T-cell (primary cell): ENCODE measurements at regions of chr1 and their contacts with region 1.

Region 1: DNA sequence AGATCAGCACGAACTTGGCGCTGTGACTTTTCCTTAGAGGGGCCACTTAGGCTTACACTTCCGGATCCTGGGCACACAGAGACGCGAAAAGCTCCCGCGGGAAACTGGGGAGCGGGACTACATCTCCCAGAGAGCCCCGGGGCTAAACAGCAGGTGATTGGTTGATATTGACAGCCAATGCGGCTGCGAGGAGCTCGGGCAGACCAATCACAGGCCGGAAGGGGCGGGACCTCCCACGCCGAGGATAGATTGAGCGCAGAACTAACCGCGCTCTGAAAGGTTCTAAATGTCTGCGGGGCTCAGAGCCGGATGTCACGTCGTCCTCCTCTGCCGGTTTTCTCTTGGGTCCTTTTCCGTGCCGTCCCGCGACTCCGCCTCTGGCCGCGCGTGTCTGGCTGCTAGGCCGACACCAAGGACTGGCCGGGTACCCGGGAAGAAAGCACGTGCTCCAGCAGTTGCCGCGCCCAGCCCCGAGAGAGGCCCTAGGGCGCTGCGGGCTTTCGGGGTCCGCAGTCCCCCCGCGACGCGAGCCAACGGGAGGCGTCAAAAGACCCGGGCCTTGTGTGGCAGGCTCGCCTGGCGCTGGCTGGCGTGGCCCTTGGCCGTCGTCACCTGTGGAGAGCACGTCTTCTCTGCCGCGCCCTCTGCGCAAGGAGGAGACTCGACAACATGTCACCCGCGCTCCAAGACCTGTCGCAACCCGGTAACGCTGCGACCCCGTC is at the start of gene MTR:
- DNase-seq: peak; percentile 85 to 97 (median 94)
- ATAC-seq: peak; percentile 91 to 96 (median 96)
- H3K4me3 ChIP-seq: peak within 1 kb of the TSS; percentile 79 to 82
- H3K4me3 Mint-ChIP-seq: peak within 1 kb of the TSS; percentile 89 to 98 (median 96)
- H3K27ac ChIP-seq: peak within 1 kb of the TSS; percentile 97
- H3K27ac Mint-ChIP-seq: peak within 1 kb of the TSS; percentile 93 to 94
- H3K4me1 ChIP-seq: peaks cover 7 to 15% of the 10 kb centered on the region in 2 experiments
- H3K4me1 Mint-ChIP-seq: peaks cover 44 to 55% (median 45%) of the 10 kb centered on the region in 3 donors
- H3K27me3 ChIP-seq: peaks cover 2 to 4% of the 10 kb centered on the region in 2 experiments
- H3K27me3 Mint-ChIP-seq: no peaks in the 10 kb centered on the region
- total RNA-seq, gene MTR: 49.8 to 61.5 (median 56.1) TPM

Region 2: GRCh38 chr1:235513495-235514366 is 1281.5 kb before region 1 on chr1:
- CTCF ChIA-PET with region 1: no interaction called
- POLR2A ChIA-PET with region 1: no interaction called
- DNase-seq: peak in 16 of 35 experiments; percentile 3 to 81 (median 16)
- ATAC-seq: peak; percentile 33 to 65 (median 58)
- H3K4me3 ChIP-seq: no peak overlapping the region
- H3K4me3 Mint-ChIP-seq: no peak overlapping the region
- H3K27ac ChIP-seq: no peak overlapping the region
- H3K27ac Mint-ChIP-seq: no peak overlapping the region
- H3K4me1 ChIP-seq: no peaks in the 10 kb centered on the region
- H3K4me1 Mint-ChIP-seq: no peaks in the 10 kb centered on the region
- H3K27me3 ChIP-seq: no peaks in the 10 kb centered on the region
- H3K27me3 Mint-ChIP-seq: peaks cover 4 to 11% of the 10 kb centered on the region in 2 donors

Region 3: GRCh38 chr1:236759252-236759859 is 35.8 kb before region 1 on chr1:
- CTCF ChIA-PET with region 1: interaction called, 7 to 12 read pairs
- POLR2A ChIA-PET with region 1: no interaction called
- DNase-seq: peak in 5 of 35 experiments; percentile 1 to 73 (median 9)
- ATAC-seq: no peak
- H3K4me3 ChIP-seq: no peak overlapping the region
- H3K4me3 Mint-ChIP-seq: no peak overlapping the region
- H3K27ac ChIP-seq: no peak overlapping the region
- H3K27ac Mint-ChIP-seq: no peak overlapping the region
- H3K4me1 ChIP-seq: no peaks in the 10 kb centered on the region
- H3K4me1 Mint-ChIP-seq: peaks cover 1 to 5% (median 3%) of the 10 kb centered on the region in 3 donors
- H3K27me3 ChIP-seq: peaks cover 0 to 2% of the 10 kb centered on the region in 2 experiments
- H3K27me3 Mint-ChIP-seq: peaks cover 6 to 14% of the 10 kb centered on the region in 2 donors

Region 4: DNA sequence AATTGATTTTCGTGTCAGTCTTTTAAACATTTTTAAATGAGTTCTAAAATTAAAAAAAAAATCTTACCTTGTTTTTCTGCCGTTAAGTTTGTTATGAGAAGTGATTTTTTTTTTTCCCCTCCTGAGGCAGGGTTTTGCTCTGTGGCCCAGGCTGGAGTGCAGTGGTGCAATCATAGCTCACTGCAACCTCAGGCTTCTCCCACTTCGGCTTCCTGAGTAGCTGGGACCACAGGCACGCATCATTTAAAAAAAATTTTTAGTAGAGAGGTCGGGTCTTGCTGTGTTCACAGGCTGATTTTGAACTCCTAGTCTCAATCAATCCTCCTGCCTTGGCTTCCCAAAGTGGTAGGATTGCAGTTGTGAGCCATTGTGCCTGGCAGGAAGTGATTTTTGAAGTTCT is 41.0 kb after region 1 on chr1:
- CTCF ChIA-PET with region 1: no interaction called
- POLR2A ChIA-PET with region 1: interaction called in 1 of 2 experiments, 17 read pairs
- DNase-seq: no peak
- ATAC-seq: no peak
- H3K4me3 ChIP-seq: no peak overlapping the region
- H3K4me3 Mint-ChIP-seq: no peak overlapping the region
- H3K27ac ChIP-seq: no peak overlapping the region
- H3K27ac Mint-ChIP-seq: peak overlapping the region in 1 of 2 donors; percentile 13
- H3K4me1 ChIP-seq: peaks cover 0 to 4% of the 10 kb centered on the region in 2 experiments
- H3K4me1 Mint-ChIP-seq: peaks cover 4 to 10% (median 5%) of the 10 kb centered on the region in 3 donors
- H3K27me3 ChIP-seq: no peaks in the 10 kb centered on the region
- H3K27me3 Mint-ChIP-seq: no peaks in the 10 kb centered on the region